GM13976 (cell line): ENCODE measurements at regions of chr3 and their contacts with region 1.

Region 1: GRCh38 chr3:53199834-53200233 is 38.8 kb downstream of the PRKCD start:
- DNase-seq: no peak
- CTCF ChIP-seq: no peak

Region 2: DNA sequence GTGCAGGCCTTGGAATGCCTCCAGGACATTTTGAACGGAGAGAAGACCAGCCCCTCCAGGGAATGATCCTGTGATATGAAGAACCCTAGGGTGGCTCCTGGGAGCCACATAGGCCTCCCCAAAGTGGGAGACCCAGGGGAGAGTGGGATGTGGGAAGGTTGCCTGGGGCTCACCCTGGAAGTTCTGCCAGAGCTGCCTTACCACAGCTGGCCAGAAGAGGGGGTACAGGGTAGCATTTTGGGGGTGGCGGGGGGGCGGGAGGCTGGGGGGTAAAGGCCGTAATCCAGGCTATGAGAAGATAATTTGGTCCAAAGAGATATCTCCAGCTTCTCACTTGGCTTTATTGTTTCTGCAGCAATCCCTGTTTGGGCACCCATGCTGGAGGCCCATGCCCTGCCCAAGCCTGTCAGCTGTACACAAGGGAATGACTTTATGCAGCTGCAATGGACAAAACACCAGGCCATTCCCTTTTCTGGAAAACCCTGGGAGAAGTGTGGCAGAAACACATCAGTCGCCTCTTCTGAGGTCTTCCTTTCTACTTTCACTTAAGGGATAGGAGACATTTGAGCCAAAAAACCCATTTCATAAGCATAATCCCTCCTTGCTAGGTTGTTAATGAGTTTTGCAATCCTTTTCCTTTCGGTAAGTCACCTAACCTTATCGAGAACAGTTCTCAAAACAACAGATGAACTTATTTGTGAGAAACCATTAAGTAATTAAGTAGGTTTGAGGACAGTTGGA is 354.0 kb before region 1 on chr3:
- in situ Hi-C with region 1: no loop called
- DNase-seq: no peak
- CTCF ChIP-seq: peak; percentile 27

Region 3: GRCh38 chr3:53030619-53031449 is 169.0 kb before region 1 on chr3:
- in situ Hi-C with region 1: no loop called
- DNase-seq: peak; percentile 59
- CTCF ChIP-seq: no peak

Region 4: DNA sequence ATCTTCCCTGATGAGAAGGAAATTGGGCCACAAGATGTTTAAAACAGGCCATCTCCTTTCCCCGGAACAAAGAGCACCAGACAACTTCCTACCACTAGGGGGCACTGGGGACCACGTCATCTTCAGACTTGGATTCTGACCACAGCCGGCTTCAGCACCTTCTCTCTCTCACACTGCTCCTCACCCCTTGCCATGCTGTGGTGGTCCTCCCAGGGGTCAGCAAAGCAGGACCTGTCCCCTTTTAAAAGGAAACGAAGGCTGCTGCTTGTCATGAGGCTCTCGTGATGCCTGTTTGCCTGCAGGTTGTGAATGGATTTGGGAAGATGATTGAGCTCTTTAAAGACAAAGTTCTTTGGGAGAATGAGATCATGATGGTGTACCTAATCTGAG is 85.8 kb before region 1 on chr3:
- in situ Hi-C with region 1: loop called (anchors 5 kb)
- DNase-seq: peak; percentile 80
- CTCF ChIP-seq: peak; percentile 84

Region 5: DNA sequence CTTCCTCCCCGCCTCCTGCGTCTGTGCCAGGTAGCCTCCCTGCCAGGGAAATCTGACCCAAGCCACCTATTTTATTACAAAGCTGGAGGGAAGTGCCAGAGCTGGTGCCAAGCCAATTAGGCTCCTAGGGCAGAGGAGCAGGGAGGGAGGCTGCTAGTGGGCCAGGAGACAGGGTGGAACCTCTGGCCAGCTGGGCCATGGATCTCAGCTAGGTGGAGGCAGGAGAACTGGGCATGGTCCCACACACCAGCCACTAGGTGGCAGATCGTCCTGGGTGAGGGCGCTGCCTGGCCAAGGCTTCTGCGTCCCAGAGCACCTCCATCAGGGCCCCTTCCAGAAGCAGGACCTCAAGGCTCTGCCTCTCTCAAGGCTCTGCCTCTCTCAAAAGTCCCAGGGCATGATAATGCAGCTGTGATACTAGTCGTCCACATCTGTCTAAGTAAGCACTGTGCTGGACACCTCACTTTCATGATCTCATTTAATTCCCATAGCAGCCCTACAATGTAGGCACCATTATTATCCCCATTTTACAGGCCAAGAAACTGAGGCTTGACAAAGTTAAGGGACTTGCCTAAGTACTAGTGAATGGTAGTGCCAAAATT is 65.1 kb before region 1 on chr3:
- in situ Hi-C with region 1: loop called (anchors 5 kb)
- DNase-seq: peak; percentile 84
- CTCF ChIP-seq: peak; percentile 88

Region 6: GRCh38 chr3:53650424-53650823 is 450.6 kb after region 1 on chr3:
- in situ Hi-C with region 1: no loop called
- DNase-seq: peak; percentile 58
- CTCF ChIP-seq: no peak